AG04449 (cell line): ENCODE measurements at regions of chr1 and their contacts with region 1.

Region 1: DNA sequence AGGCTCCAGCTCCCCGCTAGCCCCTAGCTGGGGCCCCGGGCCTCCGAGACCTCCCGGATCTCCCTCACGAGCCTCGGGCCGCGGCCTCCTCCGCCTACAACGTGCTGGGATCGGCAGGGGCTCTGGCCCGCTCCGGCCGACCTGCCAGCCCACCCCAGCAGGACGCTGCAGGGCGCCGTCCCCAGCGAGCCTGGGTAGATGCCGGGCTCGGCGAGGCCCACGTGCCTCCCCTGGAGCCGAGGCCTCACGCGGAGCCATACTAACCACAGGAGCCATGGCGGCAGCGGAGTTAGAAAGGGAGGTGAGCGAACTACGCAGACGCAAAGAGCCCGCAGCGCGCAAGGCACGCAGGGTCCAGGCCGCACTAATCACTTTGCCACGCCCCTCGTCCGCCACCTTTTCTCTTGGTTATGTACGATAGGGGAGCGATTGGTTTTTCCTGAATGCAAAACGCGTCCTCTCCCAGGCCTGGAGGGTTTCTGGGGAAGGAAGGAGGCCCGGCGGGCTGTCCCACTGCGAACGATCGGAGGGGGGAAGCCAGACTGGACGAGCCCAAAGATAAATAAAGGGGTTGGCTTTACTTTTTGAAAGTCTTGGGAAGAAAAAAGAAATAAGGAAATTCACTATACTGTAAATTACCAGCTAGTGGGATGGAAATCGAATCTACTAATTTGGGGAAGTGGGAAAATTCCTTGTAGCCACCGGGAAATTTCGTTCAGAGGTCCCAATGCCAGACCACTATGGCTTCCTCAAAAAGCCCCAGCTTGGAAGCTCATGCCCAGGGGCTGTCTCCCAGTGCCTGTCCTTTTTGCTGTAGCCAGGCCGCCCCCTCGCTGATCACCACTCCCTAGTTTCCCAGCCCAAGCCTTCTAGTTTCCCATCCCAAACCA is at the start of gene RPL22:
- DNase-seq: peak; percentile 95
- H3K4me3 ChIP-seq: peak within 1 kb of the TSS; percentile 93
- CTCF ChIP-seq: no peak

Region 2: DNA sequence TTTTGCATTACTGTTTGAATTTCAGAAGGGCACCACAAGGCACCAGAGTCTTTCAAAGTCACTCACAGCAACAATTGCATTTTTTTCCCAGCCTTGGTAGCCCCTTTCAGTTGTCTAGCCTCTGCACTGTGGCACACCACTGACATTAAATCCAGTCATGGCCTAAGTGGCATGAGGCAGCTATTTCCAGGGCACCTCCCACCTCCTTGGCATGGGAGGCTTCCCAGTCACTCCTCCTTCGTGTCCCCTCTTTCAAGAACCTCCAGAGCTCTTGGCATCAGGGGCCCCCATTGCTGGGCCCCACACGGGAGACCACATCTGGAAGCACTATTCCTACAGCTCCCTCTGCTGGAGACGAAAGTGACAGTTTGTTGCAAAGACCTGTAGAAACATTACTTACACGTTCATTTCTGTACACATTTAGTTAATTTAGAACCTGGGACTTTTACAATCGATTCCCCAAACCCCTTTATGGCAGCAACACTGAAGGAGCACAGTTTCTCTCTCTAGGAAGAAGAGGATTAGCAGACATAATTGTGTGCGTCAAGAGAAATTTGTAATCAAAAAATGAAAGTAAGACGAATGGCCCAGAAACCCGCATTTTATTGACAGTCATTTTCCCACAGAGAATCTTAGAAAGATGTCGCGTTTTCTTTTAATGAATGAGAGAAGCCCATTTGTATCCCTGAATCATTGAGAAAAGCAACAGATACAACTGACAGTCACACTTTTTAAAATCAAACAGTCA is 13.7 kb before region 1 on chr1:
- CTCF ChIA-PET with region 1: interaction called, 35 read pairs
- POLR2A ChIA-PET with region 1: interaction called, 3 read pairs
- DNase-seq: no peak
- H3K4me3 ChIP-seq: no peak overlapping the region
- CTCF ChIP-seq: peak; percentile 35

Region 3: DNA sequence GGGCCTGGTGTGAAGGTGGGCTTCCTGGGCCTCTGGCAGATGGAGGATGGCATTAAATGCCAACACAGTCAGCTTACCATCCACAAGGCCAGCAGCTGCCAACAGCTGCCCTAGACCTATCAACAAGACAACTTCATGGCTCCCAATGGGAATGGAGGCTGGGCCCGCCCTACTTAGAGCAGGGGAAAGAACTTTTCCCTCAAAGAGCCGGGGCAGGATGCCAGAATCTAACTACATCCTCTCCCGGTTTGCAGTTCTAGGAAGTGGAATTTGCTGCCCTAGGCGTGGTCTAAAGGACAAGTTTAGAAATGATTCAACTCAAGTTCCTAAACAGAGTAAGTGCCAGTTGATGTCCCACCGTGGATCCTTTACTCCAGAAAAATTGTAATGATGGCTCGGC is 23.1 kb after region 1 on chr1:
- CTCF ChIA-PET with region 1: interaction called, 27 read pairs
- POLR2A ChIA-PET with region 1: interaction called, 3 read pairs
- DNase-seq: no peak
- H3K4me3 ChIP-seq: no peak overlapping the region
- CTCF ChIP-seq: no peak